ENCODE measurements at regions of chr16 and their contacts with region 1.

Region 1: GRCh38 chr16:51818342-51818944 is 667.4 kb upstream of the SALL1 start:
- DNase-seq: peak; percentile 28
- H3K4me3 ChIP-seq: peak overlapping the region in 1 of 2 experiments; percentile 49; a peak in 1 of 4 replicates
- H3K27ac ChIP-seq: no peak overlapping the region
- H3K4me1 ChIP-seq: peaks cover 0 to 3% of the 10 kb centered on the region in 2 experiments; a peak in 1 of 4 replicates
- H3K27me3 ChIP-seq: no peaks in the 10 kb centered on the region
- CTCF ChIP-seq: peak; percentile 49
- EP300 ChIP-seq: no peak
- RAD21 ChIP-seq: peak; percentile 82

Region 2: DNA sequence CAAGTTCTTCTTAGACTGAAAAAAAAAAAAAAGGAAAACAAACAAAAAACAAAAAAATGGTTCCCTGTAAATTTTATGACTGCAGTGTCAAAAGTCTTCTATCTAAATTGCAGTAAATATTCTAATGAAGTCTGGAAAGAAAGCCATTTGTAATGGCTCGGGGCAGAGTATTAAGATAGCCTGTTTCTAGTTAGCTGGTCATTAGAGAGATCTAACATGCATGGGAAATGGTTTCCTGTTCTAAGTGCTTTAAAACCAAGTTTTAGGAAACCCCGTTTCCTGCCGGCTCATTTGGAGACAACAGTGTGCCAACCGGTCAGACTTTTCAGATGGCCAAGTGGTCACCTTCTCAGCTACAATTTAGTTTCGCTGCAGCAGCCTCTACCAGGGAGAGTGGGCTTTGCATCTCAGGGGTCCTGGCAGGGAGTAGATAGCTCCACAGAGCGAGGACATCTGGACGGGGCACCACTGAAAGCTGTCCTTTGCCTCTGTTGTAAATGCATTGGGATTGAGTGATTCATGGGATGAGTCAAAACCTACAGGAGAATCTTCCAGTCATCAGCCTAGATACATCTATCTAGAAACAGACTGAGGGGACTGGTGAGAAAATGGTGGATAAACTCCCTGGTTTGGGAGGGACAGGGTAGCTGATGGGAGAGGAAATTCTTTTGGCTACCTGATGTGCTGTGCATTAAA is 194.2 kb before region 1 on chr16:
- CTCF ChIA-PET with region 1: no interaction called
- POLR2A ChIA-PET with region 1: no interaction called
- DNase-seq: peak; percentile 70
- H3K4me3 ChIP-seq: peak overlapping the region in 1 of 2 experiments; percentile 23; a peak in 2 of 4 replicates
- H3K27ac ChIP-seq: peak overlapping the region; percentile 20 to 92; a peak in 3 of 4 replicates
- H3K4me1 ChIP-seq: peaks cover 12 to 22% of the 10 kb centered on the region in 2 experiments; a peak in 3 of 4 replicates
- H3K27me3 ChIP-seq: no peaks in the 10 kb centered on the region
- CTCF ChIP-seq: no peak
- EP300 ChIP-seq: peak in 1 of 2 experiments; percentile 93; a peak in 2 of 4 replicates
- RAD21 ChIP-seq: peak; percentile 37

Region 3: GRCh38 chr16:51797669-51798259 is 20.7 kb before region 1 on chr16:
- CTCF ChIA-PET with region 1: interaction called, 25 read pairs
- POLR2A ChIA-PET with region 1: no interaction called
- DNase-seq: no peak
- H3K4me3 ChIP-seq: no peak overlapping the region
- H3K27ac ChIP-seq: no peak overlapping the region
- H3K4me1 ChIP-seq: no peaks in the 10 kb centered on the region
- H3K27me3 ChIP-seq: no peaks in the 10 kb centered on the region
- CTCF ChIP-seq: no peak
- EP300 ChIP-seq: no peak
- RAD21 ChIP-seq: no peak

Region 4: DNA sequence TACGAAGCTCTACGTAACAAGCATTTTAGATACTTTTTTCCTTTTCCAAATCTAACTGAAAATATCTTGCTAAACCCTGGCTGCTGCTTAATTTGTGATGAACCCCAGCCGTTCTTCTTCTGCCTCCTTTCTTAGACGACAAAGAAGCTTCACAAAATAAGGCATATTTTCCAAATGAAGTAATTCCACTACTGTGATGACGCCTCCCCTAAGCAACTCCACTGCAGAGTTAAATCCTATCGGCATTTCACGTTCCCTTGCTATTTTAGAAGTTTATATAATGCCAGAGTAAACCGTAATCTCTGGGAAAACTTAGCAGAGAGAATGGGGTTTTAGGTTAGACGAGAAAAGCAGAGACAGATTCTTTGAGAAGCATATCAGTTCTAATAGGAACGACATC is 15.7 kb after region 1 on chr16:
- CTCF ChIA-PET with region 1: interaction called, 27 read pairs
- POLR2A ChIA-PET with region 1: no interaction called
- DNase-seq: no peak
- H3K4me3 ChIP-seq: no peak overlapping the region
- H3K27ac ChIP-seq: no peak overlapping the region
- H3K4me1 ChIP-seq: no peaks in the 10 kb centered on the region
- H3K27me3 ChIP-seq: no peaks in the 10 kb centered on the region
- CTCF ChIP-seq: no peak
- EP300 ChIP-seq: no peak
- RAD21 ChIP-seq: no peak

Region 5: DNA sequence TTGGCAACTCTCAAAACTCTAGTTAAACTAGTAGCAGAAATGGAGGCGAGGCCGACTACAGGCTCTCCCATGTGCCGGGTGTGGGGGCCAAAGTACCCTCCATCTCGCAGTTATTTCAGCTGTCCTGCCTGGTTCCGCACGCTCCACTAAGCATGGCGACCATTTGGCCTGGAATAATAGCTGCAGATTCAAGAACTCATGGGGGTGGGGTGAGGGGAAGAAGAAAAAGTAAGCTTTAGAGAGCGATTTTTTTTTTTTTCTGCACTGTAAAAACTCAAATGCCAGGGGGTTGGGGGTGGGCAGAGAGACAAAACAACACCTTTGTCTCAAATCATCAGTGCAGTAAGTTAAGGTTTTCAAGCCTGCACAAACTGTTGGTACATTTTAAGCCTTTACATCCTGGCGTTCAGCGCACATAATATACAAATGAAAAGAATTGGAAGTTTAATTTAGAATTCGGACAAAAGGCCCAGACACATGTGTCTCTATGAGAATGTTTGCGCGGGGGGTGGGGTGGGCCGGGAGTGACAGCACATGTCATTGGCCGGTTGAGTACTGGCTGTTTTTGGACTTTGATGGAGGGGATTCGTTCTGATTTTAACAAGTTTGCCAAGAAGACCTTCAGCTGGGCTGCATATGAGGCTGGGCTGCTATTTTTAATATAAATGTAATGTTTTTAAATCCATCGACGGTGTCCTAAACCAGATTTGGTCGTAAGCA is 27.3 kb after region 1 on chr16:
- CTCF ChIA-PET with region 1: interaction called, 16 read pairs
- POLR2A ChIA-PET with region 1: no interaction called
- DNase-seq: no peak
- H3K4me3 ChIP-seq: no peak overlapping the region
- H3K27ac ChIP-seq: no peak overlapping the region
- H3K4me1 ChIP-seq: no peaks in the 10 kb centered on the region
- H3K27me3 ChIP-seq: no peaks in the 10 kb centered on the region
- CTCF ChIP-seq: no peak
- EP300 ChIP-seq: no peak
- RAD21 ChIP-seq: no peak

Region 6: DNA sequence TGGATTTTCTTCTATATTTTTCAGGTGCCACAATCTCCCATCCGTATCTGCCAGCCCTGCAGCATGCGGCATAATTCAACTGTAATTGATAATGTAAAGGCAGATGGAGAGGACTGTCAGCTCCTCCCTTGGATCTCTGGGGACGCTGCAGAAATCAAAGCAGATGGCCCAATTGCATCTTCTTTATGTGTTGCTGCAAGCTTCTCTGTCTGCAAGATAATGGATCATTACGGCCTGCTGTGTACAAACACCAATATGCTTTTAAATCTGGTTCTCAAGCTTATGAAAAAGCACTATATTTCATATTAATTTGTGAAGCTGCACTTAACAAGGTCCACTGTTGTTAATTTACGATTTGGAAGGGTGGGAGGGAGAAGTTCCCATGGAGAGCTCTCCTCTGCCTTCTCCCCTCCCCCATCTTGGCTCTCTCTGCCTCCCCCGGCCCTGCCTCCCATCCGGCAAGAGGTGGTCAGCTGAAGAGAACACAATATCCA is 121.0 kb after region 1 on chr16:
- CTCF ChIA-PET with region 1: interaction called, 27 read pairs
- POLR2A ChIA-PET with region 1: no interaction called
- DNase-seq: peak; percentile 68
- H3K4me3 ChIP-seq: no peak overlapping the region
- H3K27ac ChIP-seq: peak overlapping the region in 1 of 2 experiments; percentile 88; a peak in 2 of 4 replicates
- H3K4me1 ChIP-seq: peaks cover 0 to 19% of the 10 kb centered on the region in 2 experiments; a peak in 2 of 4 replicates
- H3K27me3 ChIP-seq: no peaks in the 10 kb centered on the region
- CTCF ChIP-seq: no peak
- EP300 ChIP-seq: peak in 1 of 2 experiments; percentile 93; a peak in 2 of 4 replicates
- RAD21 ChIP-seq: peak; percentile 27; the same call in 1 of the 2 replicates

Region 7: DNA sequence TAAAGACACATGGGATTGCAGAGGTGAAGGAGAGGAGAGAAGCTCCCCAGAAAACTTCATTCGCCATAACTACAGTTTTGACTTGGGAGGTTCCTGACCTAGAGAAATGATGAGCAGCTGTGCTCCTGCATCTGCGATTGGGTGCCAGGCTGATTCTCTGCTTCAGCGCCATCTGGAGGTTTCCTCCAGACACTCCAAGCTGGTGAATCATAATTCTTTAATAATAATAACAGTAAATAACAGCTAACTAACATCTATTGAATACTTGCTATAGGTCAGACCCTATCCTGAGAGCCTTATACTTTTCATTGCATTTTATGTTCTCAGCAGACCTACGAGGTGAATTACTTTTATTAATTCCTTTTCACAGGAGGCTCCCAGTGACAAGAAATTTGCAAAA is 152.7 kb after region 1 on chr16:
- CTCF ChIA-PET with region 1: interaction called, 210 read pairs
- POLR2A ChIA-PET with region 1: interaction called, 5 read pairs
- DNase-seq: peak; percentile 68
- H3K4me3 ChIP-seq: no peak overlapping the region
- H3K27ac ChIP-seq: no peak overlapping the region
- H3K4me1 ChIP-seq: no peaks in the 10 kb centered on the region; a peak in 1 of 4 replicates
- H3K27me3 ChIP-seq: no peaks in the 10 kb centered on the region
- CTCF ChIP-seq: 0 out of 2 replicates have a peak, but pooled peaks have one; percentile 13
- EP300 ChIP-seq: no peak
- RAD21 ChIP-seq: peak; percentile 81